ENCODE measurements at regions of chr14 and their contacts with region 1.

Region 1: DNA sequence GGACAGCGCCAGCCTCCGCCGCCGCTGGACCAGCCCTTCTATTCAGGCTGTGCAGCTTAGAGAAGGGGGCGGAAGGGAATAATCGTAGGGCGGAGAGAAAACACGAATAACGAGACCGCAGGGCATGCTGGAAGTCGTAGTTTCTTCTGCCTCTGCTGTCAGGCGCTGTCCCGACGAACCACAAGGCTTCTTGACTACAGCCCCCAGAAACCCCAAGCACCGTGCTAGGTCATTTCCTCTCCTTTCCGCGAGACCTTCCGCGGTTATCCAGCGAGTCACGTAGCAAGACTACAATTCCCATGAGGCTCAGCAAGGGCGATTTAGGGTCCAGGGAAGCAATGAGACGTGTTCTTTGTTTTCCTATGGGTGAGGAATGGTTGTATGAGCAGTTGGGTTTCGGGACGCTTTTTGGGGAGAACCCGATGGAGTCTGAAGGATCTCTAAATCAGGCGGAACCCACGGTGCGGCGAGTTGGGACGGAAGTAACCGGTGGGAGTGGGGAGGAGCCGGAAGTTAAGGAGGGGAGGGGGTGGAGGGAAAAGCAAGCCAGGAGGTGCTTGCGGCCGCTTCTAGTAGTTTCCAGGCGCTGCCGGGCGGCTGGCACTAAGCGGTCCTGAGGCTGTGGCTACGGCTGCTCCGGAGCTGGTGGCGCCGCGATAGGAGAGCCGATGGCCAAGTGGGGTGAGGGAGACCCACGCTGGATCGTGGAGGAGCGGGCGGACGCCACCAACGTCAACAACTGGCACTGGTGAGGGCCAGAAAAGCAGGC is at the starts of genes AHSA1 and VIPAS39:
- DNase-seq: peak; percentile 92
- H3K4me3 Mint-ChIP-seq: peak within 1 kb of the TSS; percentile 100
- H3K27ac Mint-ChIP-seq: peak within 1 kb of the TSS; percentile 100
- H3K4me1 Mint-ChIP-seq: peaks cover 29% of the 10 kb centered on the region
- H3K27me3 Mint-ChIP-seq: no peaks in the 10 kb centered on the region
- total RNA-seq, gene AHSA1: 370 and 383 TPM in 2 replicates
- total RNA-seq, gene VIPAS39: 17.3 and 18.7 TPM in 2 replicates

Region 2: DNA sequence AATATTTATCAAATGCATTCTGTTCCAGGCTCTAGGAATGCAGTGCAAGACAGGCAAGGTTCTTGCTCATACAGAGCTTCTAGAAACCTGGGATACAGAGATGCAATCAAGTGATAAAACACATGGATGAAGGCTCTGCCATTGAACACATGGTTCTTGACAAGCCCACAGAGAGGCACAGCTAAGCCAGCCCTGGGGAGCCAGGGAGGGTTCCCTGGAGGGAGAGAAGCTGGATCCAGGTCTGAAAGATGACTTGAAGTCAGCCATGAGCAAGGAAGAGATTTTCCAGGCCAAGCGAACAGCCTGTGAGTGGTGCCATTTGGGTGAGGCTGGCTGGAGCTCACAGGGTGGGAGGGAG is 495.4 kb before region 1 on chr14:
- intact Hi-C with region 1: loop called (anchors 5 kb)
- DNase-seq: no peak
- H3K4me3 Mint-ChIP-seq: peak overlapping the region; percentile 80
- H3K27ac Mint-ChIP-seq: peak overlapping the region; percentile 80
- H3K4me1 Mint-ChIP-seq: peaks cover 83% of the 10 kb centered on the region
- H3K27me3 Mint-ChIP-seq: peaks cover 26% of the 10 kb centered on the region

Region 3: GRCh38 chr14:77320238-77320935 is 137.3 kb before region 1 on chr14 and contains the start of gene POMT2:
- intact Hi-C with region 1: loop called (anchors 1 kb)
- DNase-seq: peak; percentile 92
- H3K4me3 Mint-ChIP-seq: peak within 1 kb of the TSS; percentile 92
- H3K27ac Mint-ChIP-seq: peak within 1 kb of the TSS; percentile 99
- H3K4me1 Mint-ChIP-seq: peaks cover 22% of the 10 kb centered on the region
- H3K27me3 Mint-ChIP-seq: no peaks in the 10 kb centered on the region
- total RNA-seq, gene POMT2: 20.5 and 22.1 TPM in 2 replicates

Region 4: DNA sequence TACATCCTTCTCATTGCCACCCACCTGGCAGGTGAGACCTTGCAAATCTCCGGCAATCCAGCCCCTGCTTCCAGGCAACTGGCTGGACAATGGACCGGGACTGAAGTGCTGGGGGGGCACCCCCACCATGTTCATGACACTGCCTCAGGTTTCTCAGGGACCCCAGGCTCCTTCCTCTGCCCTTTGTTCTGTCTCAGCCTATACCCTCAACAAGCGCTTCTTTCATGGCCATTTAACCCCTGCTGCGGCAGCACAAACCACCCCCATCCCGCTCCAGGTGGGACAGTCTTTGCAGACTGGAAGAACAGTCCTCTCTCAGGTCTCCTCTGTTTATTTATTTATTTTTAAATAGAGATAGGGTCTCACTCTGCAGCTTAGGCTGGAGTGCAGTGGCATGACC is 33.4 kb after region 1 on chr14:
- intact Hi-C with region 1: no loop called
- DNase-seq: no peak
- H3K4me3 Mint-ChIP-seq: no peak overlapping the region
- H3K27ac Mint-ChIP-seq: no peak overlapping the region
- H3K4me1 Mint-ChIP-seq: no peaks in the 10 kb centered on the region
- H3K27me3 Mint-ChIP-seq: peaks cover 3% of the 10 kb centered on the region

Region 5: GRCh38 chr14:77554207-77554606 is 96.5 kb after region 1 on chr14:
- intact Hi-C with region 1: loop called (anchors 1 kb)
- DNase-seq: no peak
- H3K4me3 Mint-ChIP-seq: peak overlapping the region; percentile 45
- H3K27ac Mint-ChIP-seq: peak overlapping the region; percentile 47
- H3K4me1 Mint-ChIP-seq: peaks cover 17% of the 10 kb centered on the region
- H3K27me3 Mint-ChIP-seq: no peaks in the 10 kb centered on the region

Region 6: DNA sequence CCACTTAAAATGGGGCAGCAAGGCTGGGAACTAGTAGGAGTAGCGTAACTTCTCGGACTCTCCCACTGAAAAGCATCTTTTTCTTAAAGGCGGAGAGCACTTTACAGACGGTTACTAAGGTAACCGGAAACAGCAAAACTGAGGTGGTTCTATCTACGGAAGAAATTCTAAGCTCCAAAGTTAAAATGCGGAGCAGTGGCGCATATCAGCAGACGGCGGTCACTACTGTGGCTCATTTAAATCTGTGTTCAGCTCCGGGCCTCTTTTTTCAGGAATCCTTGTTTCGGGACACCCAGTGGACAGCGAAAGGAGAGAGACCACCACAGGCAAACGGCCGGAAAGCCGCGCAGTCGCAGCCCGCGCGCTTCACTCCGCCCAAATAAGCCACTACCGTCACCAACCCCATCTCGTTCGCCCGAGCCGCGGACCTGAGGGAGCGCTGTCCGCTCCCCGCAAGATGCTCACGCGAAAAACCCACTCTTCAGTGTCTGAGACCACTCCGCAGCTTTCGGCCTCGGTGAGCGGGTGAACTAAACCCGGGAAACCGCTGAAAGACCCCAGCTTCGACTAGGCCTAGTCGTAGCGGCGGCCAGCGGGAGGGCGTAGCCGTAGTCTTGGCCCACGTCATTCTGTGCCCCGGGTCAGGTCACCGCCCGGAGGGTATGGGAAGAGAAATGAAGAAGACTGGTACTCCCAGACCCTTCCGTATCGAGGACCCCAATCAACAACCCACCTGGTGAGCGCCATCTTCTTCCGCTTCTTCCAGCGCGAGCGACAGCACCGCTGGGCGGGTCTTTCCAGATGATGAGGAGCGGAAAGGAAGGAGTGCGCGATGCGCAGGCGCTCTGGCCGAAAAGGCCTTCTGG is 302.9 kb after region 1 on chr14 and contains the start of gene SNW1:
- intact Hi-C with region 1: loop called (anchors 1 kb)
- DNase-seq: peak; percentile 91
- H3K4me3 Mint-ChIP-seq: peak within 1 kb of the TSS; percentile 96
- H3K27ac Mint-ChIP-seq: peak within 1 kb of the TSS; percentile 97
- H3K4me1 Mint-ChIP-seq: peaks cover 38% of the 10 kb centered on the region
- H3K27me3 Mint-ChIP-seq: peaks cover 6% of the 10 kb centered on the region
- total RNA-seq, gene SNW1: 112 and 118 TPM in 2 replicates

Measured in activated T-helper 1 cell treated with anti-CD3 and anti-CD28 coated beads, Interleukin-12 subunit alpha, Interleukin-12 subunit beta, Interleukin-2, Interleukin-4 antibody, amounts not matched to agents 30 ng/mL and 10 ng/mL and 1 ng/mL, durations not matched to agents 14 hours and 24 hours and 36 hours (primary cell).